ENCODE measurements at regions of chr7 and their contacts with region 1.

Region 1: GRCh38 chr7:138161600-138162081 is 85.4 kb downstream of the AKR1D1 start:
- DNase-seq: peak; percentile 86
- ATAC-seq: peak; percentile 98
- H3K4me3 ChIP-seq: no peak overlapping the region
- H3K4me3 Mint-ChIP-seq: no peak overlapping the region
- H3K27ac ChIP-seq: no peak overlapping the region
- H3K27ac Mint-ChIP-seq: no peak overlapping the region
- H3K4me1 ChIP-seq: peaks cover 0 to 2% of the 10 kb centered on the region in 2 donors
- H3K4me1 Mint-ChIP-seq: no peaks in the 10 kb centered on the region
- H3K27me3 ChIP-seq: no peaks in the 10 kb centered on the region
- H3K27me3 Mint-ChIP-seq: no peaks in the 10 kb centered on the region
- CTCF ChIP-seq: peak; percentile 72

Region 2: DNA sequence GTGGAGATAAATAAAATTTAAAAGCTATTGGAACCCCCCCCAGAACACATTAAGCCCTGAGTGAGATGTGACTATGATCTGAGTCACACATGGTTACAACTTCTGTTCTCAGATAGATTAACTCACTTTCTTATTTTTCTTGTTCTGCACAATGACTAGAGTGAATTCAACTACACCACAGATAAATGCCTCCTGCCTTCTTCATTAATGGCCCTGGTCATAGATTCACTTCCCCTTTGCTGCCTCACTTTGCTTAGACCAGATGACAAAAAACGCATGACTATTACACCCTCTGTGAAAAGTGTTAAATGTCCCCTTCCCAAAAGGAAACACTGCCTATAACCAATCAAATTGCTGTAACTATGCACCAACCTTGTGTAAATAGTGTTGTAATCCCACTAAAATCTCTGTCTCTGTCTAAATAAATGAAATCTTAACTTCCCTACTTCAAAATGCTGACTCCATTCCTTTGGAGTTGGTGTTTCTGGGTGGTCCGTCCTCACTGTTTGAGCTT is 36.0 kb before region 1 on chr7:
- CTCF ChIA-PET with region 1: no interaction called
- POLR2A ChIA-PET with region 1: no interaction called
- intact Hi-C with region 1: no loop called
- DNase-seq: peak; percentile 45
- ATAC-seq: peak; percentile 36
- H3K4me3 ChIP-seq: no peak overlapping the region
- H3K4me3 Mint-ChIP-seq: no peak overlapping the region
- H3K27ac ChIP-seq: no peak overlapping the region
- H3K27ac Mint-ChIP-seq: no peak overlapping the region
- H3K4me1 ChIP-seq: peaks cover 0 to 9% of the 10 kb centered on the region in 2 donors
- H3K4me1 Mint-ChIP-seq: peaks cover 7% of the 10 kb centered on the region
- H3K27me3 ChIP-seq: no peaks in the 10 kb centered on the region
- H3K27me3 Mint-ChIP-seq: no peaks in the 10 kb centered on the region
- CTCF ChIP-seq: no peak

Region 3: GRCh38 chr7:138144958-138145357 is 16.7 kb before region 1 on chr7:
- CTCF ChIA-PET with region 1: no interaction called
- POLR2A ChIA-PET with region 1: no interaction called
- intact Hi-C with region 1: no loop called
- DNase-seq: no peak
- ATAC-seq: no peak
- H3K4me3 ChIP-seq: no peak overlapping the region
- H3K4me3 Mint-ChIP-seq: no peak overlapping the region
- H3K27ac ChIP-seq: no peak overlapping the region
- H3K27ac Mint-ChIP-seq: no peak overlapping the region
- H3K4me1 ChIP-seq: no peaks in the 10 kb centered on the region
- H3K4me1 Mint-ChIP-seq: no peaks in the 10 kb centered on the region
- H3K27me3 ChIP-seq: peaks cover 0 to 3% (median 0%) of the 10 kb centered on the region in 4 experiments
- H3K27me3 Mint-ChIP-seq: peaks cover 5% of the 10 kb centered on the region
- CTCF ChIP-seq: no peak

Region 4: GRCh38 chr7:138738551-138739335 is 577.1 kb after region 1 on chr7:
- CTCF ChIA-PET with region 1: interaction called, 49 read pairs
- POLR2A ChIA-PET with region 1: no interaction called
- intact Hi-C with region 1: no loop called
- DNase-seq: peak; percentile 63
- ATAC-seq: no peak
- H3K4me3 ChIP-seq: no peak overlapping the region
- H3K4me3 Mint-ChIP-seq: no peak overlapping the region
- H3K27ac ChIP-seq: no peak overlapping the region
- H3K27ac Mint-ChIP-seq: no peak overlapping the region
- H3K4me1 ChIP-seq: no peaks in the 10 kb centered on the region
- H3K4me1 Mint-ChIP-seq: no peaks in the 10 kb centered on the region
- H3K27me3 ChIP-seq: no peaks in the 10 kb centered on the region
- H3K27me3 Mint-ChIP-seq: no peaks in the 10 kb centered on the region
- CTCF ChIP-seq: peak; percentile 69